Aorta (tissue), 5 donors: ENCODE measurements at regions of chr2 and their contacts with region 1.

Region 1: DNA sequence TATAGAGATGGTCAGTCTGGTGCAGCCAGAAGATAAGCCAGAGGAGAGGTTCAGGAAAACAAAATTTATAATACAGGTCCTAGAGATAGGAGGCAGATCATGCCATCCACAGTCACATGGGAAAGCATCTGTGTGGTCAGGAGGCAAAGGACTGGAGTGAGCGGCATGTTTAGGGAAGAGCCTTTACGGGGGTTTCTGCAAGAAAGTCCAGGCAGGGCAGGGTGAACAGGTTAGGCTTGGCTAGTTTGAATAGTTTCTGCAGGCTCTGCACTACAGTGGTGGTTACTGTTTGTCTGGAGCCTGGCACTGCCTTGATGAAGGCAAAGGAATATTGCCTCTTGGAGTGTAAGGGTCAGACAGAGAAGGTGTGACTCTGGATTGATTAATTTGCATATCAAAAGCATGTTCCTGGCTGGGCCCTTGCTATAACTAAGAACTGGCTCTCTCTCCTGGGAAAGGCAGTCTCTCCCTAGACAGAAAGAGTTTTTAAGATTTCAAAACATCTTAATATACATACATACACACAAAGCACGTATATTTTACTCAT is 1034.7 kb upstream of the CHAC2 start:
- DNase-seq: no peak
- ATAC-seq: peak; percentile 38
- H3K4me3 ChIP-seq: no peak overlapping the region
- H3K27ac ChIP-seq: no peak overlapping the region
- H3K4me1 ChIP-seq: no peaks in the 10 kb centered on the region
- H3K27me3 ChIP-seq: no peaks in the 10 kb centered on the region

Region 2: GRCh38 chr2:52676056-52676455 is 56.9 kb before region 1 on chr2:
- intact Hi-C with region 1: no loop called
- DNase-seq: no peak
- ATAC-seq: no peak
- H3K4me3 ChIP-seq: no peak overlapping the region
- H3K27ac ChIP-seq: no peak overlapping the region
- H3K4me1 ChIP-seq: no peaks in the 10 kb centered on the region
- H3K27me3 ChIP-seq: no peaks in the 10 kb centered on the region

Region 3: DNA sequence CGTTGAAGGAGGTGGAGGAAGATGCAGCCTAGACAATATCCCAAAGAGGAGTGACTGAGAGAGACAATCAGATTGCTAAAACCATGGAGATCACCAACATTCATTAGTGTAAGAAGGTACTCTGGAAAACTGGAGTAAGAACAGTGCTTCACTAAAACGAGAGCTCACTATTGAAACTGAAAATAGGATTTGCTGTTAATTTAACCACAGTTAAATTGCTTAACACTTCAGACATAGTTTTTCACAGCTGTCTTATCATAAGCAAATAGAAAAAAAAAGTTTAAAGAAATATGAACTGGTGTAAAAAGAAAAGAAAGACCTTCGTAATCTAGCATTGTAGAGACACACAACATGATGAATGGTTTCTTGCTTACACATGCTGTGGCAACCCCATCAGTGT is 15.1 kb before region 1 on chr2:
- intact Hi-C with region 1: loop called in 1 of 2 experiments (anchors 1 kb)
- DNase-seq: no peak
- ATAC-seq: no peak
- H3K4me3 ChIP-seq: no peak overlapping the region
- H3K27ac ChIP-seq: no peak overlapping the region
- H3K4me1 ChIP-seq: no peaks in the 10 kb centered on the region
- H3K27me3 ChIP-seq: no peaks in the 10 kb centered on the region

Region 4: DNA sequence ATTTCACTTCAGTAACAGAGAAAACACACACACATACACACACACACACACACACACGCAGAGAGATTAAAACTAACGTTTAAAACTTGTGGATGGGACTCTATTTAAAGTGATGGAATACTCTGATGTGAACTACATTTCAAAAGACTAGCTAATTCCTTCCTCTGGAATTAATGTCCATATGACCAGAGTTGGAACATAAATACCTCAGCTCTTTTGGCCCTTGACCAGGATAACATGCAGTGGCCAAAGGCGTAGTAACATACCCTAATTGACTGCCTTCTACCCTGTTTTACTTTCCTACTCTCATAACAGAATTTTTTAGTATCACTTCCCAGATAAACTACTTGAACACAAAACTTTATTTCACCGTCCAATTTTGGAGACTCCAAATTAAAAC is 363.4 kb after region 1 on chr2:
- intact Hi-C with region 1: no loop called
- DNase-seq: no peak
- ATAC-seq: no peak
- H3K4me3 ChIP-seq: no peak overlapping the region
- H3K27ac ChIP-seq: no peak overlapping the region
- H3K4me1 ChIP-seq: no peaks in the 10 kb centered on the region
- H3K27me3 ChIP-seq: no peaks in the 10 kb centered on the region